Activated naive CD4-positive, alpha-beta T cell treated with anti-CD3 and anti-CD28 coated beads for 36 hours (primary cell): ENCODE measurements at regions of chr1 and their contacts with region 1.

Region 1: DNA sequence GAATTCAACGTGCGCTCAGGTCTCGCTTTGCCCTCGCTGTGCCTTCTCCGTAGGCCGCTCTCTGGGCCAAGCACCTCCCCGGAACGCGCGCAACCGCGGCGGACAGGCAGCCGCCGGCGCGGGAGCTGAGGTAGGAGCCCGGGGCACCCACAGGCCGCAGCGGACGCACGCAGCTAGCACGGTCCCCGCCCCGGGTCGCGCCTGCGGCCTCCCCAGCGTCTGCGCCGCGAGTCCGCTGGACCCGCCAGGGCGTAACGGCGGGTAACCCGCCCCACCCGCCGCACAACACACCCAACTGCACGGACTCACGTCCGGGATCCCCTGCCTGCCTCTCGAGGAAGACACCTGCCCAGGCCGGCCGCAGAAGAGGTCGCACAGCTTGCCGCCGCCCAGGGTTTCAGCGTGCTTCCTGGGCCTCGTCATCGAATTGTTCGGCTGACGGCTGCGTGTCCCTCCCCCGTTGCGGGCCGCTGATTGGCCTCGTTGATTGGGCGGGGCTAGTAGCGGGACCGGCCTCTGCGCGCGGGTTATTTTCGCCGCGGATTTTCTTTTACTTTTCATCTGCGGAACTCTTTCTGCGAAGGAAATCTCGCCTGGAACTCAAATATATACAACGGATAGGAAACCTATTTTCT is at the start of gene CLCC1:
- DNase-seq: peak; percentile 96
- H3K4me3 Mint-ChIP-seq: peak within 1 kb of the TSS; percentile 88
- H3K27ac Mint-ChIP-seq: peak within 1 kb of the TSS; percentile 87
- H3K4me1 Mint-ChIP-seq: peaks cover 26% of the 10 kb centered on the region
- H3K27me3 Mint-ChIP-seq: no peaks in the 10 kb centered on the region
- total RNA-seq, gene CLCC1: 14.3 to 15.2 TPM

Region 2: GRCh38 chr1:107056426-107057196 is 1906.6 kb before region 1 on chr1 and contains the start of gene PRMT6:
- CTCF ChIA-PET with region 1: no interaction called
- intact Hi-C with region 1: loop called (anchors 5 kb)
- DNase-seq: peak; percentile 84
- H3K4me3 Mint-ChIP-seq: peak within 1 kb of the TSS; percentile 93
- H3K27ac Mint-ChIP-seq: peak within 1 kb of the TSS; percentile 90
- H3K4me1 Mint-ChIP-seq: peaks cover 14% of the 10 kb centered on the region
- H3K27me3 Mint-ChIP-seq: no peaks in the 10 kb centered on the region
- total RNA-seq, gene PRMT6: 6.7 to 7.5 TPM

Region 3: DNA sequence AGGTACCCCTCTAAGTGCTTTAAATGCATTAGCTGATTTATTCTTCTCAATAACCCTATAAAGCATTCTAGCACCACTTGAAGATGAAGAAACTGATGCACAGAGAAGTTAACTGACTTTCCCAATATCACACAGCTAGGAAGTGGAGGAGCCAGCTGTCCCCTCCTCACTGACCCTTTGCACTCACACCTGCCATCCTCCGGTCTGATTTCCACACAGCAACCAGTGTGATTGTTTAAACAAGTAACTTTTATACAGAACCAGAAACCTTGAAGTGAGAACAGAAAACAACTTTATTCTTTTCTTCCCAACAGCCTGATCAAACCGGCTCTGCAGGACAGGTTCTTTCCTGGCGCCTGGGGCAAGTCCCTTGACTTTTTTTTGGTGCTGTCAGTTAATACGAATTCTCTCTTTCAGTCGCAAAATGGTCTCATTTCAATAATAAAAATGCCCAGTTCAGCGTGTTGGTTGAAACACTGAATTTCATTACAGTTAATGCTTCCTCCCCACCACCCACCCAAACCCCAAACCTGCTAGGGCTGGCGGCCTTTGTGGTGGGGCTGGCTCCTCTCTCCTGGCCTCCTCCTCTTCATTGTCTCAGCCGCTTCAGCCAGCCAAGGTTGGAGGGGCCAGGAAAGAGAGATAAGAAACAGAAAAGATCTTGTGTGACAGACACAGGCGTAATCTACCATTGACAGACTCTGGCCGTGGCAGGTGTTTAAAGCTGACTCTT is 429.7 kb before region 1 on chr1:
- CTCF ChIA-PET with region 1: no interaction called
- intact Hi-C with region 1: no loop called
- DNase-seq: no peak
- H3K4me3 Mint-ChIP-seq: no peak overlapping the region
- H3K27ac Mint-ChIP-seq: no peak overlapping the region
- H3K4me1 Mint-ChIP-seq: no peaks in the 10 kb centered on the region
- H3K27me3 Mint-ChIP-seq: peaks cover 7% of the 10 kb centered on the region

Region 4: GRCh38 chr1:108624055-108624454 is 339.1 kb before region 1 on chr1:
- CTCF ChIA-PET with region 1: no interaction called
- intact Hi-C with region 1: no loop called
- DNase-seq: no peak
- H3K4me3 Mint-ChIP-seq: no peak overlapping the region
- H3K27ac Mint-ChIP-seq: no peak overlapping the region
- H3K4me1 Mint-ChIP-seq: no peaks in the 10 kb centered on the region
- H3K27me3 Mint-ChIP-seq: no peaks in the 10 kb centered on the region

Region 5: DNA sequence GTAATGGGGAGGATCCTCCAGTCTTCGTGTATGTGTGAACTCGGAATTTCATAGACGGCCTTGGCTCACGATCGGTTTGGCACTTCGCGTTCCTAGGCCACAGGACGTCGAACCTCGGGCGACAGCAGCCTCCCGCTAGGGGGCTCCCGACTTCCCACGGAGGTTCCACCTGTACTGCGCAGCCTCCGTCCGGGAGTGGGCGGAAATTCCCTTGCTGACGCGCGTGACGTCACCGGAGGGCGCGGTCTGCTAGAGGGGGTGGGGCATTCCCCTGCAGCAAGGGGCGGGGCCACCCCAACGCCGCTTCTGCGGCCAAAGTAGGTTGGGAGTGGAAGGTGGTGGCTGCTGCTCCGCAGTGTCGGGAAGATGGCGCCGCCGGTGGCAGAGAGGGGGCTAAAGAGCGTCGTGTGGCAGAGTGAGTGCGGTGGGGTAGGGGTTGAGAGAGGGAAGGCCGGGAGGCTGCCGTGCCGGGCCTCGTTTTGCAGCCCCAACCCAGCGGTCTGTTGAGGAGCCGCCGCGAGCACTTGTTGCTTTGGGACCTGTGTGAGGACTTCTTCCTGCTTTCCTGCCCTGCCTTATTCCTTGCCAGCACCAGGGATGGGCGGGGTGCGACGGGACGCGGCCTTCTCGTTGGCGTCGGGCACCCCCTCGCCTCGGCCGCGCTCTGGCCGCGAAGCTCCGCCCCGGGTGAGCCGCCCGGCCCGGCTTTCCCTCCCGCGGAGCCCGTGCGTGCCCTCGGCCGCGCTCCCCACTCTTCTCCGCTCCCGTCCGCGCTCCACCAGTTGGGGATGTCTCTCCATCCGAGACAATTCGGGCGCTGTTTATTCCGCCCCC is 216.6 kb before region 1 on chr1 and contains the start of gene STXBP3:
- CTCF ChIA-PET with region 1: no interaction called
- intact Hi-C with region 1: loop called (anchors 1 kb)
- DNase-seq: peak; percentile 100
- H3K4me3 Mint-ChIP-seq: peak within 1 kb of the TSS; percentile 94
- H3K27ac Mint-ChIP-seq: peak within 1 kb of the TSS; percentile 92
- H3K4me1 Mint-ChIP-seq: peaks cover 28% of the 10 kb centered on the region
- H3K27me3 Mint-ChIP-seq: no peaks in the 10 kb centered on the region
- total RNA-seq, gene STXBP3: 29.1 to 30.3 TPM

Region 6: GRCh38 chr1:109041621-109042468 is 78.7 kb after region 1 on chr1 and contains the start of gene WDR47:
- CTCF ChIA-PET with region 1: no interaction called
- intact Hi-C with region 1: loop called (anchors 1 kb)
- DNase-seq: peak; percentile 97
- H3K4me3 Mint-ChIP-seq: peak within 1 kb of the TSS; percentile 73
- H3K27ac Mint-ChIP-seq: peak within 1 kb of the TSS; percentile 6
- H3K4me1 Mint-ChIP-seq: peaks cover 12% of the 10 kb centered on the region
- H3K27me3 Mint-ChIP-seq: no peaks in the 10 kb centered on the region
- total RNA-seq, gene WDR47: 8.2 to 8.4 TPM

Region 7: GRCh38 chr1:109090196-109091077 is 127.3 kb after region 1 on chr1 and contains the start of gene TMEM167B:
- CTCF ChIA-PET with region 1: no interaction called
- intact Hi-C with region 1: loop called (anchors 2 kb)
- DNase-seq: peak; percentile 95
- H3K4me3 Mint-ChIP-seq: peak within 1 kb of the TSS; percentile 82
- H3K27ac Mint-ChIP-seq: peak within 1 kb of the TSS; percentile 87
- H3K4me1 Mint-ChIP-seq: peaks cover 29% of the 10 kb centered on the region
- H3K27me3 Mint-ChIP-seq: no peaks in the 10 kb centered on the region
- total RNA-seq, gene TMEM167B: 35.0 to 37.6 TPM

Region 8: DNA sequence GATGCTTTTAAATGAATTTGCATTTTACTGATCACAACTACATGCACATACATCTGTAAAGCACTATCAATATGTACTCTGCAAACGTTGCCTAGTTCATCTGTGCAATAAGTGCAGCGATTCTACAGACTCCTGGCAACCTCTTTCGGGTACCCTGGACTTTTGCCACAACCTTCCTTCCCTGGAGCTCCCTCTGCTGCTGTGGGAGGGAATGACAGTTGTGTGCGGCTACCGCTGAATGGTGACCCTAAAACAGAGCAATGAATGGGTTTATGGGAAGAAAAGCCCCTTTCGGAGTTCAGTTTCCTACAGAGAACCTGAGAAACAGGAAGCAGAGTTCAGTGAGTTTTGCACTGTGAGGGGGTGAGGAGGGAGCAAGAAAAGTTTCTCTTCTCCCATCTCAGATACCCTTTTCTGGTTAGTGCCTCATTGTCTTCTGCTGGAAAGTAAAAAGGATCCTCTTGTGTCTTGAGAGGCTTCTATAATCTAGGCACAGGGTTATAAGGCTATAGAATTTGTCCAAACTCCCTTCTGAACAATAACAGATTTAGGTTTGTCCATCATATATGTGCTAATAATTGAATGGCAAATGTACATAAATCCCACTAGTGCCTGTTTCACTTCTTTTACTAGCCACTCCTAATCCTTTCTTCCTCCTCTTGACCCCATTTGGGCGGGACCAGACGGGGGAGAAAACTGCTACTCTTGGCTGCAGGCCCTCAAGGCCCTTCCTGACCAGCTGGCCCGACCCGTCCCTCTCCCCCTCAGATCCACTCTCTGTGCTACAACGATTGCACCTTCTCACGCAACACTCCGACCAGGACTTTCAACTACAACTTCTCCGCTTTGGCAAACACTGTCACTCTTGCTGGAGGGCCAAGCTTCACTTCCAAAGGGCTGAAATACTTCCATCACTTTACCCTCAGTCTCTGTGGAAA is 230.8 kb after region 1 on chr1:
- CTCF ChIA-PET with region 1: interaction called, 5 read pairs
- intact Hi-C with region 1: loop called (anchors 1 kb)
- DNase-seq: peak; percentile 73
- H3K4me3 Mint-ChIP-seq: no peak overlapping the region
- H3K27ac Mint-ChIP-seq: no peak overlapping the region
- H3K4me1 Mint-ChIP-seq: peaks cover 4% of the 10 kb centered on the region
- H3K27me3 Mint-ChIP-seq: no peaks in the 10 kb centered on the region